Transverse colon (tissue), 4 donors: ENCODE measurements at regions of chr13 and their contacts with region 1.

Region 1: GRCh38 chr13:112704308-112705145 is 14.7 kb downstream of the ATP11A start:
- DNase-seq: peak; percentile 4
- H3K4me3 ChIP-seq: no peak overlapping the region
- H3K27ac ChIP-seq: no peak overlapping the region
- H3K4me1 ChIP-seq: no peaks in the 10 kb centered on the region
- H3K27me3 ChIP-seq: no peaks in the 10 kb centered on the region
- CTCF ChIP-seq: no peak
- EP300 ChIP-seq: no peak
- POLR2A ChIP-seq: no peak

Region 2: GRCh38 chr13:112392719-112393118 is 311.8 kb before region 1 on chr13:
- in situ Hi-C with region 1: no loop called
- intact Hi-C with region 1: no loop called
- DNase-seq: no peak
- H3K4me3 ChIP-seq: no peak overlapping the region
- H3K27ac ChIP-seq: no peak overlapping the region
- H3K4me1 ChIP-seq: no peaks in the 10 kb centered on the region
- H3K27me3 ChIP-seq: no peaks in the 10 kb centered on the region
- CTCF ChIP-seq: no peak
- EP300 ChIP-seq: no peak
- POLR2A ChIP-seq: no peak

Region 3: DNA sequence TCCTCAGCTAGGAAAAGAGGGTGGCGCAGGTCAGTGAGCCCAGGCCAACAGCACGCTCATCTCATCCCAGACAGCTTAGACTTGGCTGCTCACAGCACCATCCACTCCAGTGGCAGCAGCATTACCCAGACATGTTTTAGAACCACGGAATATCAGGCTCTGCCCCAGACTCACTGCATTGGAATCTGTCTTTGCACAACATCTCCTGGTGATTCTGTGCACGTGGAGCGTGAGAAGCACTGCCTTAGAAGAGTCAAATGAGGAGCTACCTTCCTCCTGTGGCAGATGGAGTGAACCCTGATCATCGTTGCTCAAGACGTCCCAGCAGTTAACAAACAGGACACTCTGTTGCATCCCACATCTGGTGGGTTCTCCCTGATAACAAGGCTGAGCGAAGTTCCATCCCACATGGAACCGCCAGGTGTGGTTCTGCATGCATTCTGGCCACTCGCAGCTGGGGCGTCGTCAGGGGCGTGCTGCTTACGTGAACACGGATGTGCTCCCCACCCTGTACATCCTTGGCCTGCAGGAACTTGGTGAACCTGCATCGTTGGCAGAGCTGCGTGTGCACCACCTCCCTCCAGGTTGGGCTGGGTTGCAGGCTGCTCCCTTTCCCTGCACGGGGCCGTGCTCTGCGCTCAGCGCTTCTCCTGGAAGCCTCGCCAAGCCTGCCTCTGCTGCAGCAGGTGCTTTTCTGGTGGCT is 39.9 kb before region 1 on chr13:
- in situ Hi-C with region 1: no loop called
- intact Hi-C with region 1: loop called (anchors 5 kb)
- DNase-seq: no peak
- H3K4me3 ChIP-seq: no peak overlapping the region
- H3K27ac ChIP-seq: no peak overlapping the region
- H3K4me1 ChIP-seq: no peaks in the 10 kb centered on the region
- H3K27me3 ChIP-seq: no peaks in the 10 kb centered on the region
- CTCF ChIP-seq: no peak
- EP300 ChIP-seq: no peak
- POLR2A ChIP-seq: no peak

Region 4: DNA sequence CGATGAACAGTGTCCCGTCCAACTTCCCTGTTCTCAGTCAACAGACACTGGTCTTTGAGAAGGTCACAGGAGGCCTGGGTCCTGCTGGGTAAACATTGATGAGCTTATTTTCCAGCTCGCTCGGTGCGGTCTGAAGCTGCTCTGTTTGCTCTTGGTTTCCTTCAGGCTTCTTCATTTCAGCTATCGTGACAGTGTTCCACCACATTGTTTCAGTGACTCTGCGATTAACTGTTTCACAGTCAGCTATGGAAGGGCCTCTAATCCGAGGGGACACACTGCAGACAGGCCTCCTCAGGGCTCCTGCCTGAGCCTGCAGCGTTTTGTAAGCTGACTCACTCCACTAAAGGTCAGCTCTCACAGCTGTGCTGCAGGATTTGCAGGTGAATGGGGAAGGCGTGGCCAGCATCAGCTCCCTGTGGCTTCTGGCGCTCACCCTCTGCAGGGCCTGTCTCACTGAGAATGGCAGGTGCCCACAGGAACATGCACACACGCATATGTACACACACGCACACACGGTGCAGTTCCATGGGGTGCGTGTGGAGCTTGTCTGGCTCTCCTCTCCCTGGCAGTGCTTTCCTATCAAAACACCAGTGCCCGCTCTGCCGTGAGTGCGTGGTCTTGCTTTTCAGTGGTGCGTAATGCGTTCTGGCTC is 201.6 kb after region 1 on chr13:
- in situ Hi-C with region 1: no loop called
- intact Hi-C with region 1: no loop called
- DNase-seq: no peak
- H3K4me3 ChIP-seq: no peak overlapping the region
- H3K27ac ChIP-seq: no peak overlapping the region
- H3K4me1 ChIP-seq: no peaks in the 10 kb centered on the region
- H3K27me3 ChIP-seq: peaks cover 4% of the 10 kb centered on the region
- CTCF ChIP-seq: no peak
- EP300 ChIP-seq: no peak
- POLR2A ChIP-seq: no peak